PC-3 (cell line): ENCODE measurements at regions of chr2 and their contacts with region 1.

Region 1: DNA sequence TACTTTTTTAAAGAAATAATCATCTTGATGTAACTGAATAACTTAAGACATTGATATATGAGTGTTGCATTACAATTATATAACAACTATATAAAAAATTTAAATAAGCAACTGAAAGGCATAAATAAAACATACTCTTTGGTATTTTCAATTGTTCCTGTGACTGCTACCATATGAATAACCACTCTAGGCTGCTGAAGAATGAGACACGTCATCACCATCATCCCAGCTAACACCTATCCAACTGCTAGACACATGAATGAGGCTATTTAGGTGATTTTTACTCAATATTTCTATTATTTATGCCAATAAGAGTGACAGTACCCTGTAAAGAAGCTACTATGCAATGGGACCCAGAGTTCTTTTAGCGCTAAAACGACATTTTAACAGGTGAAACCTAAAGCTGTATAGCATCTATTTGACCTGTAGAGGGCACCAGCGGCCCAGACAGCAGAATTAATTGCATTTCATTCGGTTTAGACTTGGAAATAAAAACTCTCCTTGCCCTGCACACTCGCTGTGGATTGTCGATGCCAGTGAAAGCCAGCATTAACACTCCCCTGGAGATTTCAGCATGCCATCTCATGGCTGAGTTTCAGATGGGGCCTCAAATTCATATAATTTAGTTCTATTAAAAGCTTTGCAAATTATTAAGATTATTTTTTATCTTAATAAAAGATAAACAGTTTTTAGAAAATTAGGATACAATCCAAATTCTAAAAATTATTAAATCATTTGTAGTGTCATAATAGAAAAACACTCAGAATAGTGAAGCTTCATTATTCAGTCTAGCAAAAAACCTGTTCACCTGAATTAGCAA is 89.4 kb upstream of the MAP2 start:
- DNase-seq: peak; percentile 82
- ATAC-seq: peak; percentile 94
- H3K4me3 ChIP-seq: no peak overlapping the region
- H3K27ac ChIP-seq: no peak overlapping the region
- H3K4me1 ChIP-seq: no peaks in the 10 kb centered on the region
- H3K27me3 ChIP-seq: no peaks in the 10 kb centered on the region
- CTCF ChIP-seq: peak; percentile 93

Region 2: GRCh38 chr2:208392300-208393080 is 941.9 kb before region 1 on chr2:
- CTCF ChIA-PET with region 1: interaction called, 3 read pairs
- POLR2A ChIA-PET with region 1: no interaction called
- intact Hi-C with region 1: loop called (anchors 1 kb)
- DNase-seq: peak; percentile 24
- ATAC-seq: no peak
- H3K4me3 ChIP-seq: no peak overlapping the region
- H3K27ac ChIP-seq: no peak overlapping the region
- H3K4me1 ChIP-seq: no peaks in the 10 kb centered on the region
- H3K27me3 ChIP-seq: no peaks in the 10 kb centered on the region
- CTCF ChIP-seq: peak; percentile 45; the same call in 1 of the 2 replicates

Region 3: DNA sequence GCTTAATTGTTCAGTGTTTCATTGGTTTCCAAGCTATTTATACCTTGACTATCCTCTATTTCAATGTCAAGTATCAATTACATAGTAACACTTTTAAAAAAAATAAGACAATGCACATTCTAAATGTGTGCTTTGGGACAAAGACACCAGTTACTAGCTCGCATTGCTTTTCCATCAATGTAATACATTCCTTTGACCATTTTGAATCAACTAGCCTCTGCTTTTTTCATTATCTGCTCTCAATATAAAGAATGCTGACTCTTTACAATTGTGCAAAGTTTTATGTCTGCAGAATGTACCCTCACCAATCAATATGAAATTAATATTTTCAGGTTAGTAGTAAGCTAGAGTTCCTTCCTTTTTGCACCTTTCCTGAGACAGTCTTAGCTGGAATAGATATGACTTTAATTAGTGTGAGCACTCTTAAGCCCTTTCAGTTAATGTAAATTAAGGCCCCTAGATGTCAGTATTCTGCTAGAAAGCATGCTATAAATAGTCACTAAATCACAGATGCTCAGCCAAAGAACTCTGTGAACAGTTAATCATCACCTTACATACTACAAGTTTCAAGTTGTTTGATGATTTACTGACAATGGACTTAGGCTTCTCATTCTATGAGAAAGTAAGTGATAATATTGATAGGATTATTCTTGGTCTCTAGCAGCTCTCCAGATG is 514.3 kb before region 1 on chr2:
- CTCF ChIA-PET with region 1: no interaction called
- POLR2A ChIA-PET with region 1: no interaction called
- intact Hi-C with region 1: loop called (anchors 1 kb)
- DNase-seq: peak; percentile 15
- ATAC-seq: 0 out of 2 replicates have a peak, but pooled peaks have one; percentile 40
- H3K4me3 ChIP-seq: no peak overlapping the region
- H3K27ac ChIP-seq: no peak overlapping the region
- H3K4me1 ChIP-seq: no peaks in the 10 kb centered on the region
- H3K27me3 ChIP-seq: no peaks in the 10 kb centered on the region
- CTCF ChIP-seq: peak; percentile 48; the same call in 1 of the 2 replicates

Region 4: GRCh38 chr2:209298601-209299000 is 35.8 kb before region 1 on chr2:
- CTCF ChIA-PET with region 1: no interaction called
- POLR2A ChIA-PET with region 1: no interaction called
- intact Hi-C with region 1: no loop called
- DNase-seq: no peak
- ATAC-seq: no peak
- H3K4me3 ChIP-seq: no peak overlapping the region
- H3K27ac ChIP-seq: no peak overlapping the region
- H3K4me1 ChIP-seq: no peaks in the 10 kb centered on the region
- H3K27me3 ChIP-seq: peaks cover 11% of the 10 kb centered on the region
- CTCF ChIP-seq: no peak

Region 5: DNA sequence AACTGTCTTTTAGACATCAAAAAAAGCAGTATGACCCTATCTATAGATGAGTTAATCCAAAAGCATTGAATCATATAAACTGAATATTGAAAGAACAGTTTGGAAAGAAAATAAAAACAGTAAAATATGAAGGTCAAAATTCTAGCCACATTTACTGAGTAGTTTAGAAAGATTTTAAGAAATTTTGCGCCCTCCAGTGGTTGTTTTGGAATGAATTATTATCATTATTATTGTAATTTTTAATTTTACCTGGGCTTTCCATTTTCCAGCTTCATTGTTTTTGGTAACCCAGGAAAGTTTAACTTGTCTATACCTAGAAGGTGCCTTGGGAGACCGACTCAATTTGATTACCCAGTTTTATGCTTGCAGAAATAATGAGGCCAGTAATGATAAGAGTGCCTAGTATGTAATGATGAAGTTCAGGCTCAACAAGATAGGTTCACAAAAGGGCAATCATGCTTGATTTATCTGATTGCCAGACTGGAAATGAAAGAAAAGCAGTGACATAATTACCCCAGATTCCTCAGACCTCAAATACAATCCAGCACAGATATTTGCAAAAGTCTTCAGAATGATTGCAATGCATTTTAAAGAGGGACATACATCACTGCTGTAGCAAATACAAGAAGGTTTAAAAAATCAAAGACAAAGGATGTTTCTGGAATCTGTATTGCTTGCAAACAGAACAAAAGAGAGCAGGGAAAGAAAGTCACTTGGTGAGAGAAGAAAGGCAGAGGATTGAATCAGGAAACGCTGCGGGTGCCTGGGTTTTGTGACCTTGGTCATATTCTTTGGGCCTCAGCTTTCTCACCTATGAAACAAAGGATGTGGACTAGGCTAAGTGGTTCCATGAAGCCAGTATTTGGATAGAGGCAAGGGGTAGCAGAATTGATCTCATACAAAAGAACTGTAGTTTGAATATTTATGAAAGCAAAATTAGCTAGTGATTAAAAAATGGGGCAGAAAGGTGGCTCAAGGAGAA is 243.3 kb after region 1 on chr2:
- CTCF ChIA-PET with region 1: no interaction called
- POLR2A ChIA-PET with region 1: no interaction called
- intact Hi-C with region 1: loop called (anchors 5 kb)
- DNase-seq: peak; percentile 62
- ATAC-seq: no peak
- H3K4me3 ChIP-seq: no peak overlapping the region
- H3K27ac ChIP-seq: no peak overlapping the region
- H3K4me1 ChIP-seq: no peaks in the 10 kb centered on the region
- H3K27me3 ChIP-seq: no peaks in the 10 kb centered on the region
- CTCF ChIP-seq: peak; percentile 62

Region 6: DNA sequence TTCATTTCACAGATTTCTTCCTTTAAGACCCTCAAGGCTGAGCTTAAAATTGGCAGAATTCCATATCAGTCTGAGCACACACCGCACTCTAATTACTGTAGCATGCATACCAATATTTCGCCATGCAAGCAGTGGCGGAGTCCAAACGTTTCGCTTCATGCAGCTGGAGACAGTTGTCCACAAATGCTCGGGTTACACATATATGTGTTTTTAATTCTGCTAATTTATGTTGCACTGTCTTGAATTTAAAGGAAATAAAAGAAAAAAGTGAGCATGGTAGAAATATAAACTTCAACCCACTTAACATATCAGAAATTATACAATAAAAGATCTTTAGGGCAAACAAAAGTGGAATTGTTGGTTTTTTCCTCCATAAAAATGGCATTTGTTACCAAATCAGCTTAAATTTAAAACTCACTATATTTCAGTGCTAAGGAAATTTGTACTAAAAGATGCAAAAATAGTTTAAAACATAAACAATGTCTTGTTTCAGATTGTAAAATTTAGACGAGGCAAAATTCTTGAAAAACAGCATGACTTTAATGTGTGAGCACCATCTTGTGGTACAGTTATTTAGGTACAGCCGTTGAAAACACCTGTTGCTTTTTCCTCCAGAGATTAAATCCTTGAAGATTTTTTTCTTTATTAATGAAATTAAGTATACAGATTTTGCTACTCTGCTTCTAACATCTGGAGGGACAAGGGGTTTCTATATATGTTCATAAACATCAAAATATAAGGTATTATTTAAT is 860.9 kb after region 1 on chr2:
- CTCF ChIA-PET with region 1: no interaction called
- POLR2A ChIA-PET with region 1: no interaction called
- intact Hi-C with region 1: loop called (anchors 10 kb)
- DNase-seq: peak; percentile 60
- ATAC-seq: no peak
- H3K4me3 ChIP-seq: no peak overlapping the region
- H3K27ac ChIP-seq: no peak overlapping the region
- H3K4me1 ChIP-seq: no peaks in the 10 kb centered on the region
- H3K27me3 ChIP-seq: peaks cover 12% of the 10 kb centered on the region
- CTCF ChIP-seq: peak; percentile 76